ENCODE measurements at regions of chr6 and their contacts with region 1.

Region 1: GRCh38 chr6:31676322-31676903 is 4.5 kb downstream of the LY6G5C start:
- DNase-seq: no peak
- ATAC-seq: no peak
- H3K4me3 ChIP-seq: no peak overlapping the region
- H3K27ac ChIP-seq: no peak overlapping the region
- H3K4me1 ChIP-seq: peaks cover 5 to 13% of the 10 kb centered on the region in 2 donors
- H3K27me3 ChIP-seq: no peaks in the 10 kb centered on the region
- CTCF ChIP-seq: no peak

Region 2: GRCh38 chr6:31862344-31863227 is 186.2 kb after region 1 on chr6 and contains the start of gene NEU1:
- intact Hi-C with region 1: loop called in 1 of 2 experiments (anchors 10 kb)
- DNase-seq: peak; percentile 98 to 100 (median 100)
- ATAC-seq: peak; percentile 95
- H3K4me3 ChIP-seq: peak within 1 kb of the TSS; percentile 84
- H3K27ac ChIP-seq: peak within 1 kb of the TSS; percentile 80 to 91
- H3K4me1 ChIP-seq: peaks cover 11 to 29% of the 10 kb centered on the region in 2 donors
- H3K27me3 ChIP-seq: no peaks in the 10 kb centered on the region
- CTCF ChIP-seq: no peak
- polyA plus RNA-seq, gene NEU1: 25.7 to 29.8 (median 29.3) TPM

Region 3: DNA sequence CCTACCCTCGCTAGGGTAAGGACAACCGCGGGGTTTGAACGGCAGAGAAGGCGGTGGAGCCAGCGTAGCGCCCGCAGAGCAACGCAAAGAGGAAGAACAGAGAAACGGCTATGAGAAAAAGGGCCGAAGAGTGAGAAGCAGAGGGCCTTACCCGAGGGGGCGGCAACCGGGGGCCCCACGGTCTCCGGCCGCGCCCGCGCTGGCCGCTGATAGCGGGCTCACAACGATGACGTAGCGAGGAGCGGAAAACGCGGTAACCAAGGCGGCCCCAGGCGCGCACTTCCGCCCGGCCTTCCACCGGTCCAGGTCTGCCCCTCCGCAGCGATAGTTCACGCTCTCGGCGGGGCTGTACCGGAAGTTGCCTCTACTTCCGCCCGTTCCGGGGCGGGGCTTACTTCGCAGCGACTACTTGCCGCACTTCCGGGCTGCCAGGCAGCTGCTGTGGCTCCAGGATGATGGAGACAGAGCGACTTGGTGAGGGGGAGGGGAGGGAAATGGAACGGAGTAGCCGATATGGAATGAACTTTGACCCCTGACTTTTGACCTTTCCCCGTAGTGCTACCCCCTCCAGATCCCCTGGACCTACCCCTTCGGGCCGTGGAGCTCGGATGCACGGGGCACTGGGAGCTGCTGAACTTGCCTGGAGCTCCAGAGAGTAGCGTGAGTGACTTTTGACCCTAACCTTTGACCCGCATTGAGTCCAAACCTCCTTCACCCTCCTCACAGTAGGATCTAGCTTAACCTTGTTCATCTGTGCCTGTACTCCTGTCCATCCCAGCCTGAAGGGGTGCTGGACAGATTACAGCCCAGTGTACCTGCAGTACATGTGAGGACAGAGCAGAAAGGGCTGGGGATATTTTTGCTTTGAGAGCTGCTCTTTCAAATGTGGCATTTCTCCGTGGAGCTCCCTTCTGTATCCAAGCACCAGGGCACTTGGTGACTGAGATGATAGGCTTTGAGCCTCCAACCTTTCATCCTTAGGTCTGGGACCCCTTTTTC is 282.6 kb after region 1 on chr6 and contains the starts of genes NELFE and SKIC2:
- intact Hi-C with region 1: loop called in 1 of 2 experiments (anchors 10 kb)
- DNase-seq: peak; percentile 96 to 99 (median 99)
- ATAC-seq: peak; percentile 100
- H3K4me3 ChIP-seq: peak within 1 kb of the TSS; percentile 66 to 97
- H3K27ac ChIP-seq: peak within 1 kb of the TSS; percentile 82 to 85
- H3K4me1 ChIP-seq: peaks cover 13 to 32% of the 10 kb centered on the region in 2 donors
- H3K27me3 ChIP-seq: no peaks in the 10 kb centered on the region
- CTCF ChIP-seq: peak in 1 of 2 donors; percentile 13
- polyA plus RNA-seq, gene NELFE: 77.9 to 93.0 (median 82.9) TPM
- polyA plus RNA-seq, gene SKIC2: 39.1 to 50.8 (median 42.2) TPM